HCT116 (cell line): ENCODE measurements at regions of chr18 and their contacts with region 1.

Region 1: DNA sequence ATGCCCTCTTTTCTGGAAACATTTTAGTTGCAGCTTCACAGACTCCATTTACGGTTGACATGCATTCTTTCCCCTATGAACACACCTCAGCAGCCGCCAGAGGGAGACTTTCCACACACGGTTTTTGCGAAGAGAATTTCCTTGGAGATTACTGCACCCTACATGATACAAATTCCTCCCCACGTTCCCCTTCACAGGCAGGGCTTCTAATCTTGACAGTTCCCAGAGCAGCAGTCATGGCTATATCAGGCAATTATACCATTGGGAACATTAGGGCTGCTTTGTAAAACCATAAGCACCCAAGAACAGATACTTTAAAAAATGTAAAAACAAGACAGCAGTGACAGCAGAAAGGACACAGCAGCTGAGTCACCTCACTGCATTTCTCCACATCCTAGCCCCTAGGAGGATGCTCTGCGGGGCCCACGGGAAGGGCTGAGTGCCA is 253.8 kb downstream of the TGIF1 start:
- DNase-seq: peak; percentile 48
- ATAC-seq: peak; percentile 94
- H3K4me3 ChIP-seq: peak overlapping the region in 1 of 2 experiments; percentile 19; a peak in 3 of 4 replicates
- H3K27ac ChIP-seq: no peak overlapping the region
- H3K4me1 ChIP-seq: peaks cover 7 to 16% of the 10 kb centered on the region in 2 experiments
- H3K27me3 ChIP-seq: no peaks in the 10 kb centered on the region
- CTCF ChIP-seq: peak; percentile 74 to 82 (median 77)
- POLR2A ChIP-seq: no peak
- RAD21 ChIP-seq: peak; percentile 70

Region 2: DNA sequence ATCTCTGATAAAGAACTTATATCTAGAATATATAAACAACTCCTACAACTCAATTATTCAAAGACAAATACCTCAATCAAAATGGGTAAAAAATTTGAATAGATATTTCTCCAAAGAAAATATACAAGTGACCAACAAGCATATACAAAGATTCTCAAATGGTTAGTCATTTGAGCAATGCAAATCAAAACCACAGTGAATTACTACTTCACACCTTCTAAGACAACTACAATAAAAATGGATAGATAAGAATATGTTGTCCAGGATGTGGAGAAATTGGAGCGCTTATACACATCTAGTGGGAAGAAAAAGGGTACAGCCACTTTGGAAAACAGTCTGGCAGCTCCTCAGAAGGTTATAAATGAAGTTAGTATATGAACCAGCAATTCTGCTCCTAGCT is 79.1 kb after region 1 on chr18:
- CTCF ChIA-PET with region 1: no interaction called
- POLR2A ChIA-PET with region 1: no interaction called
- RAD21 ChIA-PET with region 1: no interaction called
- intact Hi-C with region 1: no loop called
- DNase-seq: no peak
- ATAC-seq: no peak
- H3K4me3 ChIP-seq: no peak overlapping the region
- H3K27ac ChIP-seq: no peak overlapping the region
- H3K4me1 ChIP-seq: no peaks in the 10 kb centered on the region
- H3K27me3 ChIP-seq: no peaks in the 10 kb centered on the region
- CTCF ChIP-seq: no peak
- POLR2A ChIP-seq: no peak
- RAD21 ChIP-seq: no peak

Region 3: GRCh38 chr18:3869848-3870247 is 166.1 kb after region 1 on chr18:
- CTCF ChIA-PET with region 1: interaction called, 37 read pairs
- POLR2A ChIA-PET with region 1: no interaction called
- RAD21 ChIA-PET with region 1: interaction called in 1 of 2 experiments, 6 read pairs
- intact Hi-C with region 1: loop called (anchors 1 kb)
- DNase-seq: peak; percentile 40
- ATAC-seq: peak; percentile 87
- H3K4me3 ChIP-seq: no peak overlapping the region
- H3K27ac ChIP-seq: no peak overlapping the region
- H3K4me1 ChIP-seq: no peaks in the 10 kb centered on the region
- H3K27me3 ChIP-seq: peaks cover 42% of the 10 kb centered on the region
- CTCF ChIP-seq: peak; percentile 31 to 59 (median 51); a peak in 4 of 6 replicates
- POLR2A ChIP-seq: no peak
- RAD21 ChIP-seq: peak; percentile 74

Region 4: GRCh38 chr18:3995476-3996102 is 291.8 kb after region 1 on chr18:
- CTCF ChIA-PET with region 1: interaction called, 11 read pairs
- POLR2A ChIA-PET with region 1: no interaction called
- RAD21 ChIA-PET with region 1: no interaction called
- intact Hi-C with region 1: loop called (anchors 1 kb)
- DNase-seq: peak; percentile 73
- ATAC-seq: peak; percentile 49; the same call in 1 of the 2 replicates
- H3K4me3 ChIP-seq: no peak overlapping the region
- H3K27ac ChIP-seq: no peak overlapping the region
- H3K4me1 ChIP-seq: peaks cover 0 to 3% of the 10 kb centered on the region in 2 experiments; a peak in 1 of 4 replicates
- H3K27me3 ChIP-seq: no peaks in the 10 kb centered on the region
- CTCF ChIP-seq: peak; percentile 58 to 85 (median 83); a peak in 5 of 6 replicates
- POLR2A ChIP-seq: no peak
- RAD21 ChIP-seq: peak; percentile 51

Region 5: DNA sequence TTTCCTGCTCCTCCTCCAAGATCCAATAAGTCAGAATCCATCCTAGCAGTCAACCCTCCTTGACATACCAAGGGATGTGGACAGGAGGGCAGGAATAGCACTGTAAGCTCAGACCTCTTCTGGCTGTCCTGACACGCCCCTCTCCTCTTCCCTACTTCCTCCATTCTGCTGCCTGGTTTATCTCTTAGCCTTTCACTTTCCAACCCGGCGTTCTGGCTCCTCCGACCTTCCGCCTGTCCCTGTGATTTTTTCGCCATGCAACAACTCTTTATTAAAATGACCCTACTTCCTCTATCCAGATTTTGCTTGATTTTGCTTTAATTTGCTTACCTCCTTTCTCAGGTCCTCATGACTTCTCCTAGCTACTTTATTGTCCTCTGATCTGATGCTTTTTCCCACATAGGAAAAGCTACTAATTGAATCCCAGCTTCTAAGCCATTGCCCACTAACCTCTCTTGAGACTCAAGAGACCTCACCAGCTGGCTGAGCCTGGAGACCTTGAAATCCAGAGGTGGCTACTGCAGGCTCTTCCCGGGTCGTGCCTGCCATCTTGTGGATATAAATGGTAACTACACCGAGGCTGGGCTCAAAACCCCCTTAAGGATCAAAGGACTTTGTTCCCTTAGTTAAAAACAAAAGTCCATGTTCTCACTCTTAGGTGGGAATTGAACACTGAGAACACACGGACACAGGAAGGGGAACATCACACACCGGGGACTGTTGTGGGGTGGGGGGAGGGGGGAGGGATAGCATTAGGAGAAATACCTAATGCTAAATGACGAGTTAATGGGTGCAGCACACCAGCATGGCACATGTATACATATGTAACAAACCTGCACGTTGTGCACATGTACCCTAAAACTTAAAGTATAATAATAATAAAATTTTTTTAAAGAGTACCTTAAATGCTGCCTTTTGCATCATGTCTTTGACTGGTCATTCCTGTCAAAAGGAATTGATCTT is 1353.9 kb after region 1 on chr18:
- CTCF ChIA-PET with region 1: no interaction called
- POLR2A ChIA-PET with region 1: no interaction called
- RAD21 ChIA-PET with region 1: no interaction called
- intact Hi-C with region 1: loop called (anchors 5 kb)
- DNase-seq: peak; percentile 21
- ATAC-seq: peak; percentile 55
- H3K4me3 ChIP-seq: no peak overlapping the region
- H3K27ac ChIP-seq: no peak overlapping the region
- H3K4me1 ChIP-seq: no peaks in the 10 kb centered on the region
- H3K27me3 ChIP-seq: no peaks in the 10 kb centered on the region
- CTCF ChIP-seq: peak in 2 of 3 experiments; percentile 51 to 68; a peak in 4 of 6 replicates
- POLR2A ChIP-seq: no peak
- RAD21 ChIP-seq: peak; percentile 55